Transverse colon (tissue), 4 donors: ENCODE measurements at regions of chr21 and their contacts with region 1.

Region 1: DNA sequence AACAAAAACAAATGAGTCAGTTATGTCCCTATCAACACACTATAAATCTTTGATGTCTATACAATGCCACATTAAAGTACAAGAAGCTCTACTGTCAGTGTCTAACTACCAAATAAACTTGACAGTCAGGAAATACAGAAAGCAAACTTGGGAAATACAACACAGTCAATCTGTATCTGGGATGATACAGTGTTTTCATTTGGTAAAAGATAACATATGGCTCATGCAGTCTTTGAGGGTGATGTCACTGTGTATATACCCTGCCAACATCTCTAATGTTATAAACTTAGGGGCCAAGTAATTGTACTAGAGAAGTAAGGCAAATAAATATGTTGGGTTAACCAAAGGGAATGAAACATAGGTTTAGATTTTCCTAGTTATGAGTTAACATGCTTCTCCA is 552.5 kb upstream of the ADAMTS5 start:
- DNase-seq: no peak
- H3K4me3 ChIP-seq: no peak overlapping the region
- H3K27ac ChIP-seq: no peak overlapping the region
- H3K4me1 ChIP-seq: no peaks in the 10 kb centered on the region
- H3K27me3 ChIP-seq: no peaks in the 10 kb centered on the region
- CTCF ChIP-seq: no peak
- EP300 ChIP-seq: no peak
- POLR2A ChIP-seq: no peak

Region 2: GRCh38 chr21:26769613-26770188 is 749.7 kb before region 1 on chr21:
- in situ Hi-C with region 1: no loop called
- intact Hi-C with region 1: loop called (anchors 10 kb)
- DNase-seq: no peak
- H3K4me3 ChIP-seq: no peak overlapping the region
- H3K27ac ChIP-seq: no peak overlapping the region
- H3K4me1 ChIP-seq: no peaks in the 10 kb centered on the region
- H3K27me3 ChIP-seq: no peaks in the 10 kb centered on the region
- CTCF ChIP-seq: peak; percentile 41 to 56 (median 49)
- EP300 ChIP-seq: no peak
- POLR2A ChIP-seq: no peak